ENCODE measurements at regions of chr5 and their contacts with region 1.

Region 1: DNA sequence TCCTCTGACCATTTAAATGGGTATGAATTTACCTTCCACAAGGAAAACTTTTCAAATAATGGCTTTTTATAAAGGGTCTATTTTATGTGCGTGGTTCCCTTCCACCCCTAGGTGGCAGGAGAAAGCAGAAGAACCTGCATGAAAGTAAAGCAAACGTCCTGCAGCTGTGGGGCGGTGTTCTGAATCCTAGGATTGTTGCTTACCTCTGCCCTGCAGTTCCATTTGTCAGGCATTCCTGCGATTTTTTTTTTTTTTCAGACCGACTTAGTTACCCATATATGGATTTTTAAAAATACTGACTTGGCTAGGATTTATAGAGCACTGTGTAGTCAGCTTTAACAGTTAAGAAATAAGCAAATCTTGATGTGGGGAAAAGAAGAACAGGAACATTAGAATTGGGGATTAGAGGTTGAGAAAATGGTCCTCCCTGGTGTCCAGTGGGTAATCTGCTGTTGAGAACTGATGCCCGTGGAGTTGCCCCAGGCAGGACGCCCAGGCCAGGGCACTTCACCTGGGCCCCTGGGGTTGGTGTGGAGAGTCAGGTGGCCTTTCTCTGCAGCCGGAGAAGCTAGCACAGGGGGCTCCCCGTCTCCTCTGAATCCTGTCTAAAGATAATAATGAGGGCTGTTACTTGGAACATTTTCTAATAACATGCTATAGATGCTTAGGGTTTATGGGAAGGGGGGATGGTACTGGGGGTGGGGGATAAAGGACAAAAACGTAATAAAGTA is 30.4 kb upstream of the LTC4S start:
- DNase-seq: peak; percentile 75
- H3K4me3 Mint-ChIP-seq: no peak overlapping the region
- H3K27ac Mint-ChIP-seq: no peak overlapping the region
- H3K4me1 Mint-ChIP-seq: peaks cover 61% of the 10 kb centered on the region
- H3K27me3 Mint-ChIP-seq: no peaks in the 10 kb centered on the region

Region 2: GRCh38 chr5:179780362-179780761 is 17.0 kb after region 1 on chr5:
- CTCF ChIA-PET with region 1: interaction called, 21 read pairs
- intact Hi-C with region 1: no loop called
- DNase-seq: no peak
- H3K4me3 Mint-ChIP-seq: no peak overlapping the region
- H3K27ac Mint-ChIP-seq: peak overlapping the region; percentile 15
- H3K4me1 Mint-ChIP-seq: no peaks in the 10 kb centered on the region
- H3K27me3 Mint-ChIP-seq: no peaks in the 10 kb centered on the region

Region 3: DNA sequence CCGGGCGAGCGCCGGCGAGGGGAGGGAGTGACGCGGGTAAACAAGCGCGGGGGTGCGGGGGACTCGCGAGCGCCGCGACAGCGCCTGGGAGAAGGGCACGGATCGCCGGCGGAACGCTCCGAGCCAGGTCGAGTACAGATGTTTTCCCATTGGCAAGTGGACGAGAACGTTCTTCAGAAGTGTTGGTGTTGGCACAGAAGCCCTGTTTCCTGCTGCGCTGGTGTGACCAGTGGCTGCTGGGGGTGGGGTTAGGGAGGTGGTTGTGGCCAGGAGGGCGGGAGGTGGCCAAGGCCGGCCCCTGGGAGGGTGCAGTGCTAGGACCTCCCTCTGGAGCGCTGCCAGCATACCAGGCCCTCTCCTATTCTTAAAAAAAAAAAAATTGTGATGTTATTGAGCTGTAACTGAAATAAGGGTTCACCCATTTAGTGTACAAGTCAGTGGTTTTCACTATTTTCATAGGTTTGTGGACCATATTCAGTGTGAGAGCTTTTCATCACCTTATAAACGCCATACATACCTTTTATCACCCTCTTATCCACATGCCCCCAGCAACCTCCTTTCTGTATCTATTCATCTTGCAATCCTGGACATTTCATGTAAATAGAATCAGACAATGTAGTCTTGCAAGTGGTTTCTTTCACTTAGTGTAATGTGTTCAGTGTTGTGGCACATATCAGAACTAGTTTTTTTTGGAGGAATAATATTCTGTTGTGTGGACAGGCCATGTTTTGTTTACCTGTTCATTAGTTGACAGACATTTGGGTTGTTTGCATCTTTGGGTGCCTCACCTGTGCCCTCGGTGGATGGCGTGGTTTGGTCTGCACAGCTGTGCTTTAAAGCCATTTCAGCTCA is 58.4 kb after region 1 on chr5:
- CTCF ChIA-PET with region 1: no interaction called
- intact Hi-C with region 1: no loop called
- DNase-seq: peak; percentile 92
- H3K4me3 Mint-ChIP-seq: peak overlapping the region; percentile 88
- H3K27ac Mint-ChIP-seq: peak overlapping the region; percentile 92
- H3K4me1 Mint-ChIP-seq: peaks cover 49% of the 10 kb centered on the region
- H3K27me3 Mint-ChIP-seq: peaks cover 4% of the 10 kb centered on the region